GM18951 (cell line): ENCODE measurements at regions of chr19 and their contacts with region 1.

Region 1: GRCh38 chr19:860481-861101 is 1.1 kb downstream of the CFD start:
- POLR2A ChIP-seq: peak; percentile 31

Region 2: DNA sequence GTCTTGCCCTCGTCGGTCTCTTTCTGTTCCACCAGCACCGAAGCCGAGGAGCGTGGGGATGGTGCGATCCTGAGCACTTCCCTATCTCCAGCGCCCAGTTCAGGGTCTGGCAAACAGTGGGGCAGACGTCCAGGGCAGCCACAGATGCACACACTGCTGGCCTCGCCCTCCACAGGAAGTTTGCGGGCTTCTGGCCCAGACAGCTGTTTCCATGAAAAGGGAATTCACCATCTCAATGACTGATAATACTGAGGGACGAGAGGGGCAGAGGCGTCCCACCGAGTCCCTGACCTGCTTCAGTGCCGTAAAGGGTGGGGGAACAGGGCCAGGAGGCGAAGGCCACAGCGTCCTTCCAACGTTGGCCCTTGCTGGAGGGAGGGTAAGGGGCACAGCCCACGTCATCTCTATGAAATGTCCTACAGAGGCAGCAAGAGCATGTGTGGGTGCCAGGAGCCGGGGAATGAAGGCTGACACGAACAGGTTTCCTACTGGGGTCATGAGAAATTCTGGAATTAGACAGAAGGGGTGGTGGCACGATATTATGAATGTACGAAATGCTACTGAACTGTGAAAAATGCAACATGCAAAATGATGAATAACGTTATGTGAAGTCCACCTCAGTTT is 419.3 kb before region 1 on chr19:
- in situ Hi-C with region 1: no loop called
- POLR2A ChIP-seq: no peak

Region 3: GRCh38 chr19:752652-753517 is 107.7 kb before region 1 on chr19:
- in situ Hi-C with region 1: no loop called
- POLR2A ChIP-seq: no peak

Region 4: DNA sequence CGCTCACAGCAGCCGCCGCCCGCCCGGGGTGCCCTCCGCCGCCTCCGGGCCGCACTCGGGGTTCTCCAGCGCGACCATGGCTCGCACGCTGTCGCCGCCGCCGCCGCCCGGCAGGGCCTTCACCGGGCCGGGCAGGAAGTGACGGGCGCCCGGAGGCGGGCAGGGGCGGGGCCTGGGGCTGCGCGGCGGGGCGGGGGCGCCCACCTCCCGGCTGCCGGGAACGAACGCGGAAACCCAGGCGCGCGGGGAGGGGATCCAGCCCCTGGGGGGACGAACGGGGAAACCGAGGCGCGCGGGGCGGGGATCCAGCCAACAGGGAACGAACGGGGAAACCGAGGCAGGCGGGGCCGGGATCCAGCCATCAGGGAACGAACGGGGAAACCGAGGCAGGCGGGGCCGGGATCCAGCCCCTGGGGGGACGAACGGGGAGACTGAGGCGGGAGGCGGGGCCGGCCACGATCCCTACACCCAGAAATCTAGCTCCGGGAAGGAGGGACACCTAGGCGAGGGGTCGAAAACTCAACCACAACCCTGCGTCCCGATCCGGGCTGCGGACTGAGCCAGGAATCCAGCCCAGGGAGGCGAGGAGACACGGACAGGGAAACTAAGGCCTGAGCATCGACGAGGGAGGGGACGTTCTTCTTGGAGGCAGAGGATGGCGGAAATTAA is 52.6 kb after region 1 on chr19 and contains the start of gene R3HDM4:
- in situ Hi-C with region 1: loop called (anchors 10 kb)
- POLR2A ChIP-seq: peak; percentile 80